GM12878 (cell line): ENCODE measurements at regions of chr3 and their contacts with region 1.

Region 1: GRCh38 chr3:147669077-147669476 is 259.9 kb downstream of the ZIC1 start:
- DNase-seq: no peak
- ATAC-seq: no peak
- H3K4me3 ChIP-seq: no peak overlapping the region
- H3K27ac ChIP-seq: no peak overlapping the region
- H3K4me1 ChIP-seq: no peaks in the 10 kb centered on the region
- H3K27me3 ChIP-seq: no peaks in the 10 kb centered on the region
- CTCF ChIP-seq: no peak
- EP300 ChIP-seq: no peak
- POLR2A ChIP-seq: no peak
- RAD21 ChIP-seq: no peak

Region 2: GRCh38 chr3:147604136-147604535 is 64.9 kb before region 1 on chr3:
- CTCF ChIA-PET with region 1: no interaction called
- POLR2A ChIA-PET with region 1: no interaction called
- RAD21 ChIA-PET with region 1: no interaction called
- SMC1A ChIA-PET with region 1: no interaction called
- in situ Hi-C with region 1: no loop called
- intact Hi-C with region 1: no loop called
- DNase-seq: no peak
- ATAC-seq: no peak
- H3K4me3 ChIP-seq: no peak overlapping the region
- H3K27ac ChIP-seq: no peak overlapping the region
- H3K4me1 ChIP-seq: no peaks in the 10 kb centered on the region
- H3K27me3 ChIP-seq: no peaks in the 10 kb centered on the region
- CTCF ChIP-seq: no peak
- EP300 ChIP-seq: no peak
- POLR2A ChIP-seq: no peak
- RAD21 ChIP-seq: no peak

Region 3: DNA sequence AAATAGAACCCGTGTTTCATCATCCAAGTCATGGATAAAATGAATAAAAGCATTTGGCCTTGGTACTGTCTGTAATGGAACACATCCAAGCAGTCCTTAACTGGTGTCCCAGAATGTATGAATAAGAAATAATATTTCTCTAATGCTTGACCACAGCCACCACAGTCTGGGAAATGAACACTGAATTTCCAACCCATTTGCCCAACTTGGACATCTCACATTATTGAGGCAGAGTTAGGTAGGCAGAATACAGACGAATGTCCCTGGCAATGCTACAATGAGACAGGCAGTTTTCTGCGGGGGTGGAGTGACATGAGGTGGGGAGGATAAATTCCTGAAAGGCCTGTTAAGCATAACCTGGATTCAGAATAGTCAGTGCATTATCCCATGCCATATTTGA is 14.2 kb before region 1 on chr3:
- CTCF ChIA-PET with region 1: interaction called, 5 read pairs
- POLR2A ChIA-PET with region 1: no interaction called
- RAD21 ChIA-PET with region 1: no interaction called
- SMC1A ChIA-PET with region 1: interaction called, 32 read pairs
- in situ Hi-C with region 1: no loop called
- intact Hi-C with region 1: no loop called
- DNase-seq: no peak
- ATAC-seq: no peak
- H3K4me3 ChIP-seq: no peak overlapping the region
- H3K27ac ChIP-seq: no peak overlapping the region
- H3K4me1 ChIP-seq: no peaks in the 10 kb centered on the region
- H3K27me3 ChIP-seq: no peaks in the 10 kb centered on the region
- CTCF ChIP-seq: no peak
- EP300 ChIP-seq: no peak
- POLR2A ChIP-seq: no peak
- RAD21 ChIP-seq: no peak

Region 4: DNA sequence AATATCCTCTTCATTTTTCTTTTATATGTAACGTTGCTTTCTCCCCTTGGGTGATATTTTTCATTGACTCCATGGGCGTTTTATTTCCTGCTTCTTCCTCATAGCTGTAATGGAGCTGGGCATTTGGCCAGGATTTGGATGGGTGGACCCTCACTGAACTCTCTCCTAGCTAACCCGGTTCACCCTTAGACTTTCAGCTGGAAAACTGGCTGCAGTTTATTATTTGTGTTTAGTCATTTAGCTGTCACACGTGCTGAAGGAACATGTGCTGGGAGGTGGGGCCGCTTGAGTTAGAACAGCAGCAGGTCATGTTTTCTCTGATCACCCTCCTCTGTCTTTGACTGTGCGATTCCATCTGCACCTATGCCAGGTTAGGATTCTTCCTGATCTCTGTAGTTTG is 147.7 kb after region 1 on chr3:
- CTCF ChIA-PET with region 1: no interaction called
- POLR2A ChIA-PET with region 1: no interaction called
- RAD21 ChIA-PET with region 1: no interaction called
- SMC1A ChIA-PET with region 1: no interaction called
- in situ Hi-C with region 1: no loop called
- intact Hi-C with region 1: no loop called
- DNase-seq: no peak
- ATAC-seq: no peak
- H3K4me3 ChIP-seq: no peak overlapping the region
- H3K27ac ChIP-seq: no peak overlapping the region
- H3K4me1 ChIP-seq: no peaks in the 10 kb centered on the region
- H3K27me3 ChIP-seq: no peaks in the 10 kb centered on the region
- CTCF ChIP-seq: no peak
- EP300 ChIP-seq: no peak
- POLR2A ChIP-seq: no peak
- RAD21 ChIP-seq: no peak

Region 5: DNA sequence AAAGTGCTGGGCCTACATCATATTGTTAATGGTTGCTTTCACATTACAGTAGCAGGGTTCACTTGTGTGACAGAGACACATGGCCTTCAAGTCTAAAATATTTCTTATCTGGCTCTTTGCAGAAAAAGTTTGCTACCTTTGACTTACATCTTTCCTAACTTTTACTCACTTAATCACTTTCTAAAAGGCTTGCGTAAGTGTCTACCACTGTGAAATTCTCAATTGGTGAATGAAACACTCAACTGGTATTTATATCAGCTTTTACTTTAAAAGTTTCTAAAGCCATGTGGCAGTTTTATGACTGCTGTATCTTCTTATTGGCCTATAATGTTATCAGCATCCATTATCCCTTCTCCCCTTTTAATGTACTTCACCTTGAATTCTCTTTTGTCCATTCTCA is 294.6 kb after region 1 on chr3:
- CTCF ChIA-PET with region 1: no interaction called
- POLR2A ChIA-PET with region 1: no interaction called
- RAD21 ChIA-PET with region 1: no interaction called
- SMC1A ChIA-PET with region 1: no interaction called
- in situ Hi-C with region 1: no loop called
- intact Hi-C with region 1: no loop called
- DNase-seq: no peak
- ATAC-seq: no peak
- H3K4me3 ChIP-seq: no peak overlapping the region
- H3K27ac ChIP-seq: no peak overlapping the region
- H3K4me1 ChIP-seq: no peaks in the 10 kb centered on the region
- H3K27me3 ChIP-seq: no peaks in the 10 kb centered on the region
- CTCF ChIP-seq: no peak
- EP300 ChIP-seq: no peak
- POLR2A ChIP-seq: no peak
- RAD21 ChIP-seq: no peak